Activated naive CD4-positive, alpha-beta T cell treated with anti-CD3 and anti-CD28 coated beads for 36 hours (primary cell): ENCODE measurements at regions of chr18 and their contacts with region 1.

Region 1: GRCh38 chr18:23231340-23232021 is 96.2 kb downstream of the CABLES1 start:
- DNase-seq: peak; percentile 91
- H3K4me3 Mint-ChIP-seq: no peak overlapping the region
- H3K27ac Mint-ChIP-seq: peak overlapping the region; percentile 94
- H3K4me1 Mint-ChIP-seq: peaks cover 45% of the 10 kb centered on the region
- H3K27me3 Mint-ChIP-seq: no peaks in the 10 kb centered on the region

Region 2: GRCh38 chr18:22822024-22822423 is 409.5 kb before region 1 on chr18:
- CTCF ChIA-PET with region 1: no interaction called
- intact Hi-C with region 1: loop called (anchors 10 kb)
- DNase-seq: no peak
- H3K4me3 Mint-ChIP-seq: no peak overlapping the region
- H3K27ac Mint-ChIP-seq: no peak overlapping the region
- H3K4me1 Mint-ChIP-seq: no peaks in the 10 kb centered on the region
- H3K27me3 Mint-ChIP-seq: no peaks in the 10 kb centered on the region

Region 3: GRCh38 chr18:23131693-23132319 is 99.7 kb before region 1 on chr18:
- CTCF ChIA-PET with region 1: interaction called, 4 read pairs
- intact Hi-C with region 1: loop called (anchors 1 kb)
- DNase-seq: peak; percentile 75
- H3K4me3 Mint-ChIP-seq: no peak overlapping the region
- H3K27ac Mint-ChIP-seq: no peak overlapping the region
- H3K4me1 Mint-ChIP-seq: peaks cover 14% of the 10 kb centered on the region
- H3K27me3 Mint-ChIP-seq: peaks cover 28% of the 10 kb centered on the region

Region 4: GRCh38 chr18:23259701-23260582 is 28.5 kb after region 1 on chr18:
- CTCF ChIA-PET with region 1: no interaction called
- intact Hi-C with region 1: loop called (anchors 1 kb)
- DNase-seq: peak; percentile 43
- H3K4me3 Mint-ChIP-seq: peak overlapping the region; percentile 34
- H3K27ac Mint-ChIP-seq: peak overlapping the region; percentile 61
- H3K4me1 Mint-ChIP-seq: peaks cover 35% of the 10 kb centered on the region
- H3K27me3 Mint-ChIP-seq: no peaks in the 10 kb centered on the region

Region 5: DNA sequence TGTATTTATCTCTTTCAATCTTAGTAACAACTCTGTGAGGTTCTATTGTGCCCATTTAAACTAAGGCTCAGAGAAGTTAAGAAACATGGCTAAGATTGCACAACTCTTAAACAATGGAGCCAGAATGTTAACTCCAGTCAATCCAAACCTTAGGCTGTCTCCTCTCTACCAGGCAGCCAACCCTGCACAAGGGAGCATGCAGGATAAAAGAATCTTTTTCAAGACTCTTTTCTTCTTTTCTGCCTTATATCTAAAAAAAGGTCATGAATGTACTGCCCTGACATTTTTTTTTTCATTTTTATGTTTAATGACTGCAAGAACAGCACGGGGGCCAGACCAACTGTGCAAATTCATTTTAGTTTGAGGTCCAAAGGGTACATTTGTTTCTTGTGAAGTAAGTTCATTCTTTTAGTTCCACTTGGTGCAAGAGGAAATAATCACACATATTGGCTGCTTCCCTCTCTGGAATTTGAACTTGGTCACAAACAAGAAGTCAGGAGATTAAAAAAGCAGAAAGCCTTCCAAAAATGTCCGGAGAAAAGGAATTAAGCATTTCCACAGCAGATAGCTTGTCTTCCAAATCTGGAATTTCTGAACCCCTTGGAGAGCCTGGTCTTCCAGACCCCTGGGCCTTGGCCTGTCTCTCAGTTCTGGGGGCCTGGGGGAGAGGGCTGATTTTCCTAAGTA is 125.6 kb after region 1 on chr18:
- CTCF ChIA-PET with region 1: no interaction called
- intact Hi-C with region 1: loop called (anchors 2 kb)
- DNase-seq: no peak
- H3K4me3 Mint-ChIP-seq: no peak overlapping the region
- H3K27ac Mint-ChIP-seq: no peak overlapping the region
- H3K4me1 Mint-ChIP-seq: peaks cover 14% of the 10 kb centered on the region
- H3K27me3 Mint-ChIP-seq: no peaks in the 10 kb centered on the region

Region 6: DNA sequence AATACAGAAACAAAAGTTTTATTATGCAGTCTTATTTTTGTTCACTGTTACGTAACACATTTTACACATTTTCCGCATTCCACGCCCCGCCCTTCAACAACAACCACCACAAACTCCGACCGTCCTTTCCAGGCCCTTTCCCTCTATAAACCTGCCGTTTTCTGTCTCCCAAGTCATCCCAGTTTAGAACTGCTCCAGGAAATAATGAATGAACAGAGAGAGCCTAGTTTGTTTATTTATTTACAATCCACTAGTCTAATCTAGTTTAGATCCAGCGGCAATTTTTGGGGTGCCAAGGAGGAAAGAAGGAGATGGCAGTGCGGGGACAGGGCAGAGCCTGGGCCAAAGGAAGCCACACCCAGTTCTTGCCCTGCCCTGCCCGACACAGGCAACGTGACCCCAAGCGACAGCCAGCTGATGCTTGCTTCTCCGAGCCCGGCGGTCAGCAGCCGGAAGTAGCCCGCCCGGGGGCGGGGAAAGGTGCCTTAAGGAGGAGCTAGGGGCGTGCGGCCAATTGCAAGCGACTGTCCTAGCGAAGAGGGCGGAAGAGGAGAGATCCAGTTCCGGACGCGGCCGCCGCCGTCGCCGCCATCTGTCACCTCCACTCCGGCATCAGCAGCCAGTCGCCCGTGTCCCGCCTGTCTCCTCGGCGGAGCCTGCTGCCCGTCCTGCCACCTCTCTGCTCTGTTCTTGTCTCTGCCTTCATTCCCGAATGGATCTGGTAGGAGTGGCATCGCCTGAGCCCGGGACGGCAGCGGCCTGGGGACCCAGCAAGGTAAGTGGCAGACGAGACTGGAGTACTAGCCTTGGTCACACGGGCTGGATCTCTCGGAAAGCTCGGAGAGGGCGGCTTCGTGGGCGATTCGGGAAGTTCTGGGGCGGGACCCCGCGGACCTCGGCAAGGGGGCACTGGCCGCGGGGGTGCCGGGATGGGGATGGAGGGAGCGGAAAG is 221.5 kb after region 1 on chr18 and contains the start of gene RIOK3:
- CTCF ChIA-PET with region 1: no interaction called
- intact Hi-C with region 1: loop called (anchors 1 kb)
- DNase-seq: peak; percentile 94
- H3K4me3 Mint-ChIP-seq: peak within 1 kb of the TSS; percentile 99
- H3K27ac Mint-ChIP-seq: peak within 1 kb of the TSS; percentile 91
- H3K4me1 Mint-ChIP-seq: peaks cover 42% of the 10 kb centered on the region
- H3K27me3 Mint-ChIP-seq: no peaks in the 10 kb centered on the region
- total RNA-seq, gene RIOK3: 53.8 to 59.5 TPM